Gastrocnemius medialis (tissue), 4 donors: ENCODE measurements at regions of chr10 and their contacts with region 1.

Region 1: DNA sequence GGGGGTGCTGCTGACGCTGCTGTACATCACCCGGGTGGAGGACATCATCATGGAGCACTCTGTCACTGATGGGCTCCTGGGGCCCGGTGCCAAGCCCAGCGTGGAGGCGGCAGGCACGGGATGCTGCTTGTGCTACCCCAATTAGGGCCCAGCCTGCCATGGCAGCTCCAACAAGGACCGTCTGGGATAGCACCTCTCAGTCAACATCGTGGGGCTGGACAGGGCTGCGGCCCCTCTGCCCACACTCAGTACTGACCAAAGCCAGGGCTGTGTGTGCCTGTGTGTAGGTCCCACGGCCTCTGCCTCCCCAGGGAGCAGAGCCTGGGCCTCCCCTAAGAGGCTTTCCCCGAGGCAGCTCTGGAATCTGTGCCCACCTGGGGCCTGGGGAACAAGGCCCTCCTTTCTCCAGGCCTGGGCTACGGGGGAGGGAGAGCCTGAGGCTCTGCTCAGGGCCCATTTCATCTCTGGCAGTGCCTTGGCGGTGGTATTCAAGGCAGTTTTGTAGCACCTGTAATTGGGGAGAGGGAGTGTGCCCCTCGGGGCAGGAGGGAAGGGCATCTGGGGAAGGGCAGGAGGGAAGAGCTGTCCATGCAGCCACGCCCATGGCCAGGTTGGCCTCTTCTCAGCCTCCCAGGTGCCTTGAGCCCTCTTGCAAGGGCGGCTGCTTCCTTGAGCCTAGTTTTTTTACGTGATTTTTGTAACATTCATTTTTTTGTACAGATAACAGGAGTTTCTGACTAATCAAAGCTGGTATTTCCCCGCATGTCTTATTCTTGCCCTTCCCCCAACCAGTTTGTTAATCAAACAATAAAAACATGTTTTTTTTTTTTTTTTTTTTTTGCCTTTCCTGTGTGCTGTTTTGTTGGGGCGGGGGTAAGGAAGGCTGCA is 55.8 kb downstream of the TSPAN15 start:
- DNase-seq: peak in 1 of 2 donors; percentile 12
- ATAC-seq: no peak
- H3K4me3 ChIP-seq: peak overlapping the region in 2 of 4 donors; percentile 30 to 50
- H3K27ac ChIP-seq: peak overlapping the region; percentile 55 to 75 (median 68)
- H3K4me1 ChIP-seq: peaks cover 35 to 45% of the 10 kb centered on the region in 2 donors
- H3K27me3 ChIP-seq: no peaks in the 10 kb centered on the region
- CTCF ChIP-seq: no peak
- POLR2A ChIP-seq: no peak

Region 2: GRCh38 chr10:69237528-69238159 is 269.4 kb before region 1 on chr10:
- in situ Hi-C with region 1: loop called (anchors 25 kb)
- intact Hi-C with region 1: loop called (anchors 10 kb)
- DNase-seq: peak; percentile 59 to 79
- ATAC-seq: peak; percentile 97 to 99
- H3K4me3 ChIP-seq: no peak overlapping the region
- H3K27ac ChIP-seq: no peak overlapping the region
- H3K4me1 ChIP-seq: no peaks in the 10 kb centered on the region
- H3K27me3 ChIP-seq: no peaks in the 10 kb centered on the region
- CTCF ChIP-seq: peak; percentile 82 to 97 (median 96)
- POLR2A ChIP-seq: no peak

Region 3: DNA sequence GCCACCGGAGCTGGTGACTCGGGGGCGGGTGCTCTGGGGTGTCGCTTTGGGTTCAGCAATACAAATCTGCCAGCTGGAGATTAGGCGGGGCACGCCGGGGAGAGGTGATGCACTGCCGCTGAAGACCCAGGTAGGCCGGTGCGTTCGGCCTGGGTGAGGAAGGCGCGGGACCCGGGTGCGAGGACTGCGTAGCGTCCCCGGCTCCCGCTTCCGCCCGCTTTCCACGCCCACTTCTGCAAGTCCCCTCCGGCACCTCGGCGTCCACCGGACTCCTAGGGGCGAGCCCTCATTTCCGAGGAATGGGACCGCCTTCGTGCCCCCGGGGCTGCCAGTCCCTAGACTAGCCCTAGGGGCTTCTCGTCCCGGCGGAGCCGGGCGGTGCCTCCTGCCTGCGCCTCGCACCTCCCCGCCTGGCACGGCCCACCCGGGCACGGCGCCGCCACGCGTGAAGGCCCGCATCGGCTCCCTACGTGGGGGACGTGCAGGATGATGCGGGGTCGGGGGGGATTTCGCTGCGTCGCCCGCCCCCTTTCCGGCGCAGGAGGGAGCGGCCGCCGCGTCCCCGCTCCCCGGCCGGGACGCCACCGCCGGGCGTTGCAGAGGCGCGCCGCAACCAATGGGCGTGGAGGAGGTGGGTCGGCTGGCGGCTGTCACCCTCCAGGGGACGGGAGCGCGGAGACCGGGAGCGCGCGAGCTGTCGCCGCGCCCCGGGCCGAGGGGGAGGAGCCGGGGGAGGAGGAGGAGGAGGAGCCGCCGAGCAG is 188.8 kb before region 1 on chr10:
- in situ Hi-C with region 1: no loop called
- intact Hi-C with region 1: loop called (anchors 5 kb)
- DNase-seq: peak; percentile 88 to 89
- ATAC-seq: peak; percentile 81 to 84
- H3K4me3 ChIP-seq: peak overlapping the region; percentile 92 to 97 (median 96)
- H3K27ac ChIP-seq: peak overlapping the region; percentile 92 to 98 (median 96)
- H3K4me1 ChIP-seq: peaks cover 34 to 41% of the 10 kb centered on the region in 2 donors
- H3K27me3 ChIP-seq: no peaks in the 10 kb centered on the region
- CTCF ChIP-seq: peak in 1 of 5 experiments; percentile 25
- POLR2A ChIP-seq: no peak

Region 4: GRCh38 chr10:69408318-69409175 is 98.5 kb before region 1 on chr10:
- in situ Hi-C with region 1: no loop called
- intact Hi-C with region 1: loop called (anchors 1 kb)
- DNase-seq: peak; percentile 85 to 92
- ATAC-seq: peak; percentile 73 to 81
- H3K4me3 ChIP-seq: peak overlapping the region; percentile 51 to 67 (median 59)
- H3K27ac ChIP-seq: peak overlapping the region; percentile 87 to 99 (median 90)
- H3K4me1 ChIP-seq: peaks cover 17 to 31% of the 10 kb centered on the region in 2 donors
- H3K27me3 ChIP-seq: no peaks in the 10 kb centered on the region
- CTCF ChIP-seq: peak; percentile 19 to 91 (median 64)
- POLR2A ChIP-seq: peak; percentile 35 to 43

Region 5: GRCh38 chr10:69425511-69426298 is 81.4 kb before region 1 on chr10:
- in situ Hi-C with region 1: loop called (anchors 5 kb)
- intact Hi-C with region 1: loop called (anchors 1 kb)
- DNase-seq: peak in 1 of 2 donors; percentile 2
- ATAC-seq: no peak
- H3K4me3 ChIP-seq: no peak overlapping the region
- H3K27ac ChIP-seq: peak overlapping the region in 1 of 4 donors; percentile 30
- H3K4me1 ChIP-seq: peaks cover 0 to 5% of the 10 kb centered on the region in 2 donors
- H3K27me3 ChIP-seq: no peaks in the 10 kb centered on the region
- CTCF ChIP-seq: no peak
- POLR2A ChIP-seq: no peak

Region 6: DNA sequence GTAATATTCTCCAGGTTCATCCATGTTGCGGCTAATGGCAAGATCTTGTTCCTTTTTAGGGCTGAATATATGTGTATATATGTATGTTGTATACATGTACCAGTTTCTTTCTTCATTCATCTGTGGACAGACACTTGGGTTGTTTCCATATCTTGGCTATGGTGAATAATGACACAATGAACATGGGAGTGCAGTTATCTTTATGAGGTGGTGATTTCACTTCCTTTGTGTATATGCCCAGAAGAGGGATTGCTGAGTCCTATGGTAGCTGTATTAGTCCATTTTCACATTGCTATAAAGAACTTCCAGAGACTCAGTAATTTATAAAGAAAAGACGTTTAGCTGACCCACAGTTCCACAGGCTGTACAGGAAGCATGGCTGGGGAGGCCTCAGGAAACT is 72.9 kb before region 1 on chr10:
- in situ Hi-C with region 1: loop called (anchors 5 kb)
- intact Hi-C with region 1: no loop called
- DNase-seq: no peak
- ATAC-seq: no peak
- H3K4me3 ChIP-seq: no peak overlapping the region
- H3K27ac ChIP-seq: no peak overlapping the region
- H3K4me1 ChIP-seq: peaks cover 5 to 13% of the 10 kb centered on the region in 2 donors
- H3K27me3 ChIP-seq: no peaks in the 10 kb centered on the region
- CTCF ChIP-seq: no peak
- POLR2A ChIP-seq: no peak

Region 7: GRCh38 chr10:69800109-69800508 is 293.0 kb after region 1 on chr10:
- in situ Hi-C with region 1: no loop called
- intact Hi-C with region 1: loop called (anchors 10 kb)
- DNase-seq: no peak
- ATAC-seq: peak; percentile 17 to 28
- H3K4me3 ChIP-seq: no peak overlapping the region
- H3K27ac ChIP-seq: no peak overlapping the region
- H3K4me1 ChIP-seq: peaks cover 10 to 12% of the 10 kb centered on the region in 2 donors
- H3K27me3 ChIP-seq: no peaks in the 10 kb centered on the region
- CTCF ChIP-seq: peak; percentile 21 to 69 (median 43)
- POLR2A ChIP-seq: no peak